B cell (primary cell): ENCODE measurements at regions of chr4 and their contacts with region 1.

Region 1: GRCh38 chr4:39068907-39069306 is 6.9 kb downstream of the KLHL5 start:
- DNase-seq: no peak
- ATAC-seq: no peak
- H3K4me3 ChIP-seq: no peak overlapping the region
- H3K4me3 Mint-ChIP-seq: no peak overlapping the region
- H3K27ac ChIP-seq: peak overlapping the region in 1 of 2 donors; percentile 7
- H3K27ac Mint-ChIP-seq: no peak overlapping the region
- H3K4me1 ChIP-seq: no peaks in the 10 kb centered on the region
- H3K4me1 Mint-ChIP-seq: peaks cover 40% of the 10 kb centered on the region
- H3K27me3 ChIP-seq: no peaks in the 10 kb centered on the region
- H3K27me3 Mint-ChIP-seq: no peaks in the 10 kb centered on the region
- CTCF ChIP-seq: no peak

Region 2: DNA sequence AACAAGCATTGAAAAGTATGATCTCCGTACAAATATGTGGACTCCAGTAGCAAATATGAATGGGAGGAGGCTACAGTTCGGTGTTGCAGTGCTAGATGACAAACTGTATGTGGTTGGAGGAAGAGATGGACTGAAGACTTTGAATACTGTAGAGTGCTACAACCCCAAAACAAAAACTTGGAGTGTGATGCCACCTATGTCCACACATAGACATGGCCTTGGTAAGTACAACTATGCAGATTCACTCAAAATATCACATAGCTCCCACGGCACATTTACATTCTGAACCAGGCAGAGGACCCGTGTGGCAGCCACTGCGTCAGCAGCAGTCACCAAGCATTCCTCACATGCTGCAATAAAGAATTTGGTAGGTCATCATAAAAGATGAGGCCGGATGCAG is 34.4 kb after region 1 on chr4:
- CTCF ChIA-PET with region 1: no interaction called
- POLR2A ChIA-PET with region 1: interaction called, 12 read pairs
- intact Hi-C with region 1: no loop called
- DNase-seq: no peak
- ATAC-seq: no peak
- H3K4me3 ChIP-seq: no peak overlapping the region
- H3K4me3 Mint-ChIP-seq: no peak overlapping the region
- H3K27ac ChIP-seq: no peak overlapping the region
- H3K27ac Mint-ChIP-seq: no peak overlapping the region
- H3K4me1 ChIP-seq: no peaks in the 10 kb centered on the region
- H3K4me1 Mint-ChIP-seq: no peaks in the 10 kb centered on the region
- H3K27me3 ChIP-seq: no peaks in the 10 kb centered on the region
- H3K27me3 Mint-ChIP-seq: no peaks in the 10 kb centered on the region
- CTCF ChIP-seq: no peak

Region 3: DNA sequence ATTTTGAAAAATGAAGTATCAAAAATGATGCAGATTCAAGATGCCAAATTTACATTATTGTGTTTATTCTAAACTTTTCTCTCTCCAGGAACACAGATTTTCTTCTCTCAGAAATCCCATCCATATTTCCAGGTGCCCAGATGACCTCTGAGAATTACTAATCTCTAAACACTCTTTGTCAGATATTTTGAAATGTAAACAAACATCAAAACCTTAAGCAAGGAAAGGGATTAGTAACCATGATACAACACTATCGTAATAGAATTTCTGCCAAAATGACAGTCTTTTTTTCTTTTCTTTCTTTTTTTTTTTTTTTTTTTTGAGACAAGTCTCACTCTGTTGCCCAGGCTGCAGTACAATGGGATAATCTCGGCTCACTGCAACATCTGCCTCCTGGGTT is 832.1 kb after region 1 on chr4:
- CTCF ChIA-PET with region 1: no interaction called
- POLR2A ChIA-PET with region 1: no interaction called
- intact Hi-C with region 1: no loop called
- DNase-seq: no peak
- ATAC-seq: no peak
- H3K4me3 ChIP-seq: no peak overlapping the region
- H3K4me3 Mint-ChIP-seq: no peak overlapping the region
- H3K27ac ChIP-seq: no peak overlapping the region
- H3K27ac Mint-ChIP-seq: no peak overlapping the region
- H3K4me1 ChIP-seq: no peaks in the 10 kb centered on the region
- H3K4me1 Mint-ChIP-seq: no peaks in the 10 kb centered on the region
- H3K27me3 ChIP-seq: no peaks in the 10 kb centered on the region
- H3K27me3 Mint-ChIP-seq: no peaks in the 10 kb centered on the region
- CTCF ChIP-seq: no peak